CD4-positive, alpha-beta memory T cell (primary cell): ENCODE measurements at regions of chr1 and their contacts with region 1.

Region 1: DNA sequence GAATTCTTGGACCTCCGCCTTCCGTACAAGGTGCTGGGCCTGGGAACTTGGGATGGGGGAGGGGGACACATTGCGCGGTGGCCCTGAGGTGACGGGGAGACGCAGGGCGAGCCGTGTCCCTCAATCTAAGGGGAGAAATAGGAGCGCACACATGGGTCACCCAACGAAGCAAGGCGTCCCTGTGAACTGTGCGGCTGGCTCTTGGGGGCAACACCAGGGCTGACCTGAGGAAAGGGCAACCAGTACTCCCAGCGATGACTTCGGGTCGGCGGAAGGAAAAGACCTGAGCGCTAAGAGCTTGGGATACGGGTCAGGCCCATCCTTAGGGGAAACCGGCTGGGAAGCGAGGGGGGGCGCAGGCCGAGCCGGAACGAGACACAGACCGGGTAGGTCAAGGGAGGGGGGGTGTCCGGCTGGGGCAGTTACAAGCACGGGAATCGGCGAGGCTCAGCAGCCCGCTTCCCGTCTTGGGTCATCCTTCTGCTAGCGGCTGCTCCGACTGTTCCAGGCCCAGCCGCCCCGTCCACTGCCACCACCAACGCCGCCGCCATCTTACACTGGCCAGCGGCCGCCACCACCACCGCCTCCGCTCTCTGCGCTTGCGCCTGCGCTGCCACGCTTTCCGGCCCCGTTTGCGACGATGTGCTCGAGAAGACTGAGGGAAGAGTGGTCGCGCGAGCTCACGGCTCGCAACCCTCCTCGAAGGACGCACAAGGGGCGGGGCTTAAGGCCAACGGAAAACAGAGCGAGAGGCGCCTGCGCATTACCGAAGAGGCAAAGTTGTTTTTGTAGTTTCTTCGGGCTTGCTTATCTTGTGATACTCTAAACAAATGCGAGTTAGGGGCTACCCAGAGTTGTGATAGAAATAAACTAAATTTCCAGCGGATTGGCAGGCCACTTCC is at the start of gene DCAF8:
- DNase-seq: peak; percentile 96 to 98 (median 97)
- H3K4me3 ChIP-seq: peak within 1 kb of the TSS; percentile 84 to 91
- H3K4me3 Mint-ChIP-seq: peak within 1 kb of the TSS; percentile 93 to 100 (median 96)
- H3K27ac ChIP-seq: peak within 1 kb of the TSS; percentile 96
- H3K27ac Mint-ChIP-seq: peak within 1 kb of the TSS; percentile 96 to 100 (median 99)
- H3K4me1 ChIP-seq: peaks cover 42% of the 10 kb centered on the region
- H3K4me1 Mint-ChIP-seq: peaks cover 21 to 61% (median 44%) of the 10 kb centered on the region in 4 donors
- H3K27me3 ChIP-seq: no peaks in the 10 kb centered on the region
- H3K27me3 Mint-ChIP-seq: no peaks in the 10 kb centered on the region
- total RNA-seq, gene DCAF8: 211 to 223 TPM

Region 2: GRCh38 chr1:160205242-160206035 is 56.7 kb before region 1 on chr1 and contains the start of gene PEA15:
- CTCF ChIA-PET with region 1: interaction called, 3 read pairs
- POLR2A ChIA-PET with region 1: interaction called, 13 read pairs
- intact Hi-C with region 1: no loop called
- DNase-seq: peak; percentile 59 to 68 (median 62)
- H3K4me3 ChIP-seq: peak within 1 kb of the TSS; percentile 31 to 88
- H3K4me3 Mint-ChIP-seq: peak within 1 kb of the TSS; percentile 88 to 96 (median 92)
- H3K27ac ChIP-seq: peak within 1 kb of the TSS; percentile 77
- H3K27ac Mint-ChIP-seq: peak within 1 kb of the TSS; percentile 88 to 98 (median 94)
- H3K4me1 ChIP-seq: peaks cover 30% of the 10 kb centered on the region
- H3K4me1 Mint-ChIP-seq: peaks cover 29 to 48% (median 40%) of the 10 kb centered on the region in 4 donors
- H3K27me3 ChIP-seq: no peaks in the 10 kb centered on the region
- H3K27me3 Mint-ChIP-seq: no peaks in the 10 kb centered on the region
- total RNA-seq, gene PEA15: 23.1 to 25.1 TPM

Region 3: DNA sequence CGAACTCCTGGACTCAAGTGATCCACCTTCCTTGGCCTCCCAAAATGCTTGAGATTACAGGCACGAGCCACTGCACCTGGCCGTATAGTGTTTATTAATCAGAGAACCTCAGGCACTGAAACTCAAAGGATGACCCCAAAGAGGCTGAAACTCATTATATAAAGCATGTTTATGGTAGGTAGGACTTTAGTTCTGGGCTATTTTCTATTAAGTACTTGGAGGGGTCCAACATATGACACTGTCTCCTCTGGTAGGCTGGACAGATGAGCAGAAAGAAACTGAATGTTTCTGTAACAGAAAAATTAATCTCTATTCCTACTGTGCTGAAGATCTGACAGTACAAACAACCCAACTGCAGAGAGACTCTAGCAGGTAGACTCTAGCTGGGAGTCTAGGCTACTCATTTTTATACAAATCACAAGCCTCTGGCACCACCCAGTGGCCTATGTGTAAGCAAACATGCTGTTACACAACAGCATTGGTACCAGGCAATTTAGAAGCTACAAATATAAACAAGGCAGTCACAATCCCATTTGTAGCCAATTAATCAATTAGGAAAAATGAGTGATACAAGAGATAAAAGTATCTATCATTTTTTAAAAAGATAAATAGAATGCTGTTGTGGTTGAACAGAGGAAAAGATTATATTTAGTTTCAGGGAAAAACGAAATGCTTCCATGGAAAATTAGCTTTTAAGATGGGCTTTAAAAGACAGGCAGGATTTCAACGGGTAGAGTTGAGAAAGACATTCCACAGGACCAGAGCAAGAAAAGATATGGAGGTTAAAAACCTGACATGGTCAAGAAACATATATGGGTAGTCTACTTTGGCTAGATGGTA is 10.2 kb before region 1 on chr1:
- CTCF ChIA-PET with region 1: interaction called, 49 read pairs
- POLR2A ChIA-PET with region 1: interaction called, 42 read pairs
- intact Hi-C with region 1: no loop called
- DNase-seq: peak; percentile 52 to 72 (median 56)
- H3K4me3 ChIP-seq: no peak overlapping the region
- H3K4me3 Mint-ChIP-seq: no peak overlapping the region
- H3K27ac ChIP-seq: no peak overlapping the region
- H3K27ac Mint-ChIP-seq: peak overlapping the region; percentile 2 to 90 (median 79)
- H3K4me1 ChIP-seq: peaks cover 12% of the 10 kb centered on the region
- H3K4me1 Mint-ChIP-seq: peaks cover 15 to 20% (median 18%) of the 10 kb centered on the region in 4 donors
- H3K27me3 ChIP-seq: no peaks in the 10 kb centered on the region
- H3K27me3 Mint-ChIP-seq: no peaks in the 10 kb centered on the region

Region 4: GRCh38 chr1:160277330-160277729 is 15.2 kb after region 1 on chr1:
- CTCF ChIA-PET with region 1: interaction called, 4 read pairs
- POLR2A ChIA-PET with region 1: interaction called, 66 read pairs
- intact Hi-C with region 1: no loop called
- DNase-seq: no peak
- H3K4me3 ChIP-seq: no peak overlapping the region
- H3K4me3 Mint-ChIP-seq: no peak overlapping the region
- H3K27ac ChIP-seq: no peak overlapping the region
- H3K27ac Mint-ChIP-seq: no peak overlapping the region
- H3K4me1 ChIP-seq: no peaks in the 10 kb centered on the region
- H3K4me1 Mint-ChIP-seq: peaks cover 0 to 7% (median 2%) of the 10 kb centered on the region in 4 donors
- H3K27me3 ChIP-seq: no peaks in the 10 kb centered on the region
- H3K27me3 Mint-ChIP-seq: no peaks in the 10 kb centered on the region

Region 5: GRCh38 chr1:160284782-160285344 is 22.7 kb after region 1 on chr1 and contains the start of gene PEX19:
- CTCF ChIA-PET with region 1: interaction called, 86 read pairs
- POLR2A ChIA-PET with region 1: interaction called, 90 read pairs
- intact Hi-C with region 1: loop called (anchors 1 kb)
- DNase-seq: peak; percentile 90 to 95 (median 92)
- H3K4me3 ChIP-seq: peak within 1 kb of the TSS; percentile 53 to 98
- H3K4me3 Mint-ChIP-seq: peak within 1 kb of the TSS; percentile 98 to 100 (median 99)
- H3K27ac ChIP-seq: peak within 1 kb of the TSS; percentile 81
- H3K27ac Mint-ChIP-seq: peak within 1 kb of the TSS; percentile 71 to 99 (median 98)
- H3K4me1 ChIP-seq: peaks cover 24% of the 10 kb centered on the region
- H3K4me1 Mint-ChIP-seq: peaks cover 20 to 44% (median 28%) of the 10 kb centered on the region in 4 donors
- H3K27me3 ChIP-seq: no peaks in the 10 kb centered on the region
- H3K27me3 Mint-ChIP-seq: no peaks in the 10 kb centered on the region
- total RNA-seq, gene PEX19: 53.5 to 60.6 TPM

Region 6: DNA sequence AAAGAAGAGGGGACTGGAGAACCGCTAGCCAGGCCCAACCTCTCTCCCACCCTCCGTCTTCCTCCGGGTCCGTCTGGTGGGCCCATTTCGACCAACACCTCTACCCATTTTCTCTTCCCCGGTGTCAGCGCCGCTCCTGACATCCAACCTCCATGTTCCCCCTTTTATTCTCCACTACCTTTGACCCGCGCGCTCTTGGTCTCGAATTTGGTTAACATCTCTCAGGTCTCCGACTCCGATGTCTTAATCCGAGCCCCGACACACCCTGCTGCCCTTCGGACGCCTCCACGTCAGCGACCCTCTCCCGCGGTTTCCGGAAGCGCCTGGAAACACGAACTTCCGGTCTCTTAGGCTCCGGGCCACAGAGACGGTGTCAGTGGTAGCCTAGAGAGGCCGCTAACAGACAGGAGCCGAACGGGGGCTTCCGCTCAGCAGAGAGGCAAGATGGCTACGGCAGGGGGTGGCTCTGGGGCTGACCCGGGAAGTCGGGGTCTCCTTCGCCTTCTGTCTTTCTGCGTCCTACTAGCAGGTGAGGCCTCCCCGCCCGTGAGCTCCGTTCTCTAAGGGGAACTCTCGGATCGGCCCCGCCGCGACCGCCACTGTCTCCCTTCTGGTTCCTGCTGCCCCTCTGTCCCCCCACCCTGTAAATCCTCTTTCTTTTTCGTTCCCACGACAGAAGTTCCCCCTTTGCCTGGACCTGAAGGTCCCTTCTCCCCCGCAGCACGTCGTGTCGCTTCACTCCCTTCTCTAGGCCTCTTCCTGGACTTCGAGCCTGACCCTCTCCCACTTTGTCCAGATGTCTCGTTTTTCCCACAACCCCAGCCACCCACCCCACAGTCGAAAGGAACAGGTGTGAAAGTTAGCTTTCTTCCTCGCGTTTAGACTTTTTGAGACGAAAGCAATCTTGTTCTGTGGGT is 81.1 kb after region 1 on chr1 and contains the starts of genes COPA and NCSTN:
- CTCF ChIA-PET with region 1: no interaction called
- POLR2A ChIA-PET with region 1: no interaction called
- intact Hi-C with region 1: loop called (anchors 2 kb)
- DNase-seq: peak; percentile 89 to 95 (median 89)
- H3K4me3 ChIP-seq: peak within 1 kb of the TSS; percentile 77 to 96
- H3K4me3 Mint-ChIP-seq: peak within 1 kb of the TSS; percentile 99 to 100 (median 100)
- H3K27ac ChIP-seq: peak within 1 kb of the TSS; percentile 94
- H3K27ac Mint-ChIP-seq: peak within 1 kb of the TSS; percentile 96 to 100 (median 100)
- H3K4me1 ChIP-seq: peaks cover 44% of the 10 kb centered on the region
- H3K4me1 Mint-ChIP-seq: peaks cover 35 to 67% (median 49%) of the 10 kb centered on the region in 4 donors
- H3K27me3 ChIP-seq: no peaks in the 10 kb centered on the region
- H3K27me3 Mint-ChIP-seq: no peaks in the 10 kb centered on the region
- total RNA-seq, gene COPA: 128 to 132 TPM
- total RNA-seq, gene NCSTN: 62.2 to 68.0 TPM